ENCODE measurements at regions of chrX and their contacts with region 1.

Region 1: GRCh38 chrX:39820938-39821708 is 276.6 kb downstream of the BCOR start:
- DNase-seq: peak in 2 of 10 donors; percentile 32 to 47
- H3K4me3 ChIP-seq: peak overlapping the region; percentile 14 to 67 (median 47)
- H3K27ac ChIP-seq: peak overlapping the region in 3 of 59 donors; percentile 2 to 48 (median 5)
- H3K27me3 ChIP-seq: peaks cover 0 to 95% (median 39%) of the 10 kb centered on the region in 45 donors
- CTCF ChIP-seq: no peak

Region 2: DNA sequence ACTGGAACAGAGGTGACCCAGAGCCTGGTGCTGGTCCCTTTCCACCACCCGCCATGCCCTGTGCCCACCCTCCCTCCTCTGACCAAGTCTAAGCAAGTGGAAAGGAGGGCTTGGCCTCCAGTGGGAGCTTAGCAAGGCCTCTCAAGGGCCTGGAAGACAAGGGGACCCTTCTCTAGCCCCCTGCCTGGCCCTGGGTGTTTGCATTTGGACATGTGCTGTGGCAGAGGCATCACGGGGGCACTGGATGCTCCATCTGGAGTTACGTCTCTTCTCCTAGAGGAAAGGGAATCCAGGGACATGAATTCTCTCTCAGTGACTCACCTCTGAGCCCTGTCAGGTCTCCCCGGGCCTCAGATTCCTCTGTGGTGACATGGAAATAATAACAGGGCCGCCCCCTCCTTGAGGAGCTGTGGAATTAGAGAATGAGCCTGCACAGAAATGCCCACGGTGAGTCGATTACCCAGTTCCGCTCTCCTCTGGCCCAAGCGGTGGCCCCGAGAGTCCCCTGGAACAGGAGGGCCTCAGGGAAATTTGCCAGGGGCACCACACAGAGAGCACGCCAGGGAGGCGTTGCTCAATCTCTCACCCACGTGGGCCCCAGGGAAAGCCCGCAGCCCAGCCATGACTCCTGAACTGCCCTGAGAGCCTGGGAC is 87.0 kb after region 1 on chrX:
- intact Hi-C with region 1: loop called in 1 of 2 experiments (anchors 10 kb)
- DNase-seq: peak in 1 of 10 donors; percentile 42
- H3K4me3 ChIP-seq: no peak overlapping the region
- H3K27ac ChIP-seq: no peak overlapping the region
- H3K27me3 ChIP-seq: peaks cover 0 to 86% (median 13%) of the 10 kb centered on the region in 45 donors
- CTCF ChIP-seq: no peak

Measured in dorsolateral prefrontal cortex (tissue), 120 donors.